ENCODE measurements at regions of chr10 and their contacts with region 1.

Region 1: DNA sequence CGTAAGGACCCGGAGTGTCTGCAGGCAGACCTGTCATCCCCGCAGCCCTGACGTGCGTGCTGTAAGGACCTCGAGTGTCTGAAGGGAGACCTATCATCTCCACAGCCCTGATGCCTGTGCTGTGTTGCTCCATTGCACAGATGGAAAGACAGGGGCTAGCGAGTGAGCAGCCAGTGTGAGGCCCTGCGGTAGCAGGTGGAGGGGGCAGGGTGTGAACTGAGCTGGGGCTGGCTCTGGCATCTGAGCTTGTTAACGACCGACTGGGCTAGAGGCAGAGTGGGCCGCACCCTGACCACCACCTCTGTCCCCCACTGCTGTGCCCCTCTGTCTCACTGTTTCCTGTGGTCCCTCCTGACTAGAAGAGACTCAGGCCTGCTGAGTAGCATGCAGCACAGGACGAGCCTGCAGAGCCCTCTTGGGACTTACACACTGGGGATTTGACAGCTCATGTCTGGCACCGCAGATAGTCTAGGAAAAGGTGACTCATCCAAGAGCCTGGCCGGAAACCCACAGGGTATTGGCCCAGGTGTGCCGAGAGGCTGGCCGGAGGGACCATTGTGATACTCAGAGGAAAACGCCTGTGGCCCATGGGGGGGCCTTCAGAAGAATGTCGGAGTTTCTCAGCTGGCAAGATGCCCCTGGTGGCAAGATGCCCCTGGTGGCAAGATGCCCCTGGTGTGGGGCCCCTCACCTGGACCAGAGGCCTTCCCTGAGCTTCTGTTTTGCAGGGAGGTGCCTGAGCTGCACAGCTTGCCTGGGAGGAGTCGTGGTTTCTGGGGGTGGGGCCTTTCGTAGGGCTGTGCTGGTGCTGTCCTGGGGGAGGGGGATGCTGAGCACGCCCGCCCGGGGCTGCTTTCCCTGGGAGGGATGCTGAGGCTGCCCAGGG is 34.3 kb downstream of the INPP5A start:
- H3K4me3 Mint-ChIP-seq: no peak overlapping the region
- H3K27ac Mint-ChIP-seq: no peak overlapping the region
- H3K4me1 Mint-ChIP-seq: no peaks in the 10 kb centered on the region
- H3K27me3 Mint-ChIP-seq: peaks cover 12% of the 10 kb centered on the region

Region 2: GRCh38 chr10:132458593-132459300 is 113.1 kb before region 1 on chr10:
- intact Hi-C with region 1: loop called (anchors 2 kb)
- H3K4me3 Mint-ChIP-seq: no peak overlapping the region
- H3K27ac Mint-ChIP-seq: no peak overlapping the region
- H3K4me1 Mint-ChIP-seq: peaks cover 7% of the 10 kb centered on the region
- H3K27me3 Mint-ChIP-seq: peaks cover 33% of the 10 kb centered on the region

Region 3: DNA sequence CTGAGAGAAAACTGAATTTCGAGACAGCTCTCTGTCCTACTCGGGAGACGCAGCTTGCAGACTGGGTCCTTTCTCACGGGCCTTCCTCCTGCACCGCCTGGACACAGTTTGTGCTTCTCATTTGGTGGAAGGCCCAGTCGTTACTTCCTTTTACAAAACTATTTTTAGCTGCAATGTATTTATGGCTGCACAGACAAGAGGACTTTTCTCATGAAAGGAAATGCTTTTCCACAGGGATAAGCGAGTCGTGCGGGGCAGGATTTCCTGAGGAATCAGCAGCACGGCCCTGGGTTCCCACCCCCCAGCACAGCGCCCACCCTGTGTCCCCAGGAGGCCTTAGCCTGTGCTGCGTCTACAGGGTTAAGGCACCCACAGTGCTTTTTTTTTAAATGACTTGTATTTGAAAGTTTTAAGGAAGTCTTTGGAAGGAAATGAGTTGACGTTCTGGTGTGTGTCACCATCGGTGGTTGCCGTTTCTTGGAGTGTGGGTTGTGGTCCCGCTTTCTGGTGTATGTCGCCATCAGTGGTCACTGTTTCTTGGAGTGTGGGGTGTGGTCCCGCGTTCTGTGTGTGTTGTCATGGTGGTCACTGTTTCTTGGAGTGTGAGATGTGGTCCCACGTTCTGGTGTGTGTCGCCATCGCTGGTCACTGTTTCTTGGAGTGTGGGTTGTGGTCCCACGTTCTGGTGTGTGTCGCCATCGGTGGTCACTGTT is 16.6 kb after region 1 on chr10:
- intact Hi-C with region 1: loop called (anchors 1 kb)
- H3K4me3 Mint-ChIP-seq: peak overlapping the region; percentile 67
- H3K27ac Mint-ChIP-seq: peak overlapping the region; percentile 94
- H3K4me1 Mint-ChIP-seq: peaks cover 73% of the 10 kb centered on the region
- H3K27me3 Mint-ChIP-seq: peaks cover 11% of the 10 kb centered on the region

Measured in dendritic cell treated with granulocyte-macrophage colony-stimulating factor and Interleukin-4, amounts not matched to agents 40 ng/mL and 50 ng/mL, for 4 days (primary cell).